SK-N-SH (cell line): ENCODE measurements at regions of chr1 and their contacts with region 1.

Region 1: DNA sequence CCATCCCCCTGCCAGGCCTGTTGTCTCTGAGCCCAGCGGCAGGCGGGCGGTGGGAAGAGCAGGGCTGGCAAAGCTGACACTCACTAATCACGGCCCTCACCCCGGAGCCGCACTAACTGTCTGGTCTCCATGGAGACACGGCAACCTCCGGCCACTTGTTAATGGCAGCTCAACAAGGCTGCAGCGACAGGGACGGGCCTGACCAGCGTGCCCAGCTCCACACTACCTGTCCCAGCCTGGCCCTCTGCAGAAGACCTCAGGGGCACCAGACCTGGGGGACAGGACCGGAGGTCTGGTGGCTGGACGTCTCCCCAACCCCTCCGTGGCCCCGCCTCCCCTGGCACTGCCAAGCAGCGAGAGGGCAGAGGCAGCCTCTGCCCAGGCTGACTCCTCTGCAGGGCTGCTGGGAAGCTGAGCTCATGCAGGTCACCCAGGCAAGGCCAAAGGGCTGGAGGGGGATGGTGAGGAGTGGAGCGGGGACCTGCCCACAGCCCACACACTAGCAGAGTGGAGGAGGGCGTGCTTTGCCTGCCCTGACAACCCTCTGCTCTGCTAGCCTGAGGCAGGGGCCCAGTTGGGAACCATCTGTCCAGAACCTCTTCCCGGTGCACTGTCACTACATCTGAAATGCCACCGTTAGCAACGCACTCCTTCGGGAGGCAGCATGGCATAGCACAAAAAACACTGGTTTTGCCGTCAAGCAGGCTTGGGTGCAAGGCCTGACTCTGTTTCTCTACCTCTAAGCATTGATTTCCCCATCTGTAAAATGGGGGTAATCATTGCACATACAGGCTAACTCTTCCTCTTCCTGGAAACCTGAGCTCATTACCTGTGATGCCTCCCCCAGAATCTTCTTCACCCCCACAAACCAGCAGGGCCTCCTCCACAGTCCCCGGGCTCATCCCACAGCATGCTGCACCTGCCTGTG is 29.6 kb upstream of the WASF2 start:
- DNase-seq: peak; percentile 87
- H3K4me3 ChIP-seq: no peak overlapping the region; a peak in 1 of 4 replicates
- H3K27ac ChIP-seq: peak overlapping the region in 1 of 2 experiments; percentile 92; a peak in 2 of 4 replicates
- H3K4me1 ChIP-seq: peaks cover 0 to 65% of the 10 kb centered on the region in 2 experiments; a peak in 1 of 4 replicates
- H3K27me3 ChIP-seq: no peaks in the 10 kb centered on the region
- CTCF ChIP-seq: no peak
- EP300 ChIP-seq: no peak
- RAD21 ChIP-seq: peak; percentile 32; the same call in 1 of the 2 replicates

Region 2: GRCh38 chr1:27489910-27490741 is 29.5 kb before region 1 on chr1 and contains the start of gene WASF2:
- CTCF ChIA-PET with region 1: no interaction called
- POLR2A ChIA-PET with region 1: interaction called, 11 read pairs
- DNase-seq: peak; percentile 95
- H3K4me3 ChIP-seq: peak within 1 kb of the TSS; percentile 83
- H3K27ac ChIP-seq: peak within 1 kb of the TSS; percentile 85 to 90
- H3K4me1 ChIP-seq: peaks cover 6 to 9% of the 10 kb centered on the region in 2 experiments; a peak in 3 of 4 replicates
- H3K27me3 ChIP-seq: no peaks in the 10 kb centered on the region
- CTCF ChIP-seq: no peak
- EP300 ChIP-seq: 0 out of 4 replicates have a peak, but pooled peaks of 1 of the 2 experiments have one; percentile 37
- RAD21 ChIP-seq: no peak
- polyA plus RNA-seq, gene WASF2: 23.0 and 27.1 TPM in 2 replicates